PC-9 (cell line): ENCODE measurements at regions of chr16 and their contacts with region 1.

Region 1: GRCh38 chr16:68737046-68737729 is at the start of gene CDH1:
- DNase-seq: peak; percentile 84 to 94
- H3K4me3 ChIP-seq: peak within 1 kb of the TSS; percentile 80
- H3K27ac ChIP-seq: peak within 1 kb of the TSS; percentile 85
- H3K4me1 ChIP-seq: peaks cover 50% of the 10 kb centered on the region
- H3K27me3 ChIP-seq: no peaks in the 10 kb centered on the region
- CTCF ChIP-seq: 0 out of 2 replicates have a peak, but pooled peaks have one; percentile 4
- total RNA-seq, gene CDH1: 117 and 120 TPM in 2 replicates

Region 2: DNA sequence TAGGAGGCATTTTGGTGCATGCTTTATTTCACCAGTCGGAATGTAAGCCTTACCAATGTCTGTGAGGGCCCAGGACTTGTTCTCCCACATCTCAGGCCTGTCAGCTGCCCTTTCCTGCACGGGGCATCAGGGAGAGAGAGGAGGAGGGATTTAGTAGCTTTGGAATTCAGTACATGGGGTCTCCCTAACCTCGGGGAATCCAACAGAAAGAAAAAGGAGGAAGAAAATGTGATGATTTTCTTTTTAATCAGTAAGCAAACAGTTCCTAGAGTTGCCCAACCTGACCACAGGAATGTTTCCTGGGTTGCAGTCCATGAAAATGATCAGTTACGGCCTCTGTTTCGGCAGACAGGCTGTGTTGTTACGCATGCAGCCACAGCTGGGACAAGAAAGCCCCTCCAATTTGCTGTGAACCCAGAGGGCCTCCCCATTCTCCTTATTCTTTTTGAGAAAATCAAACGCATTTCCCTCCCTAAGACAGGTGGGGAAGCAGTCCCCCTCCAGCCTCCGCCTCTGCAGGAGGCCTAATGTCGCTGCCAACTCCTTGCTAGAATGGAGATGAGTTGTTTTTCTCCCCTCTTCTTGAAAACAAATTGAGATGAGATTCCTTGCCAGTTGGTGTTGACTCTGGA is 53.1 kb after region 1 on chr16:
- CTCF ChIA-PET with region 1: interaction called, 7 read pairs
- POLR2A ChIA-PET with region 1: interaction called, 11 read pairs
- intact Hi-C with region 1: loop called (anchors 2 kb)
- DNase-seq: peak; percentile 80 to 97
- H3K4me3 ChIP-seq: peak overlapping the region; percentile 3; the same call in 1 of the 2 replicates
- H3K27ac ChIP-seq: peak overlapping the region; percentile 48
- H3K4me1 ChIP-seq: peaks cover 57% of the 10 kb centered on the region
- H3K27me3 ChIP-seq: no peaks in the 10 kb centered on the region
- CTCF ChIP-seq: no peak